ENCODE measurements at regions of chr1 and their contacts with region 1.

Region 1: GRCh38 chr1:107430540-107431228 is 289.8 kb downstream of the NTNG1 start:
- DNase-seq: peak; percentile 67
- ATAC-seq: peak; percentile 98
- H3K4me3 ChIP-seq: no peak overlapping the region; a peak in 1 of 6 replicates
- H3K27ac ChIP-seq: no peak overlapping the region
- H3K4me1 ChIP-seq: peaks cover 7% of the 10 kb centered on the region; the same call in 1 of the 2 replicates
- H3K27me3 ChIP-seq: no peaks in the 10 kb centered on the region
- CTCF ChIP-seq: peak; percentile 92
- EP300 ChIP-seq: no peak
- POLR2A ChIP-seq: no peak
- RAD21 ChIP-seq: peak; percentile 71

Region 2: GRCh38 chr1:107100331-107100984 is 330.2 kb before region 1 on chr1:
- CTCF ChIA-PET with region 1: no interaction called
- POLR2A ChIA-PET with region 1: no interaction called
- in situ Hi-C with region 1: no loop called
- intact Hi-C with region 1: no loop called
- DNase-seq: no peak
- ATAC-seq: no peak
- H3K4me3 ChIP-seq: no peak overlapping the region
- H3K27ac ChIP-seq: no peak overlapping the region
- H3K4me1 ChIP-seq: no peaks in the 10 kb centered on the region
- H3K27me3 ChIP-seq: no peaks in the 10 kb centered on the region
- CTCF ChIP-seq: no peak
- EP300 ChIP-seq: no peak
- POLR2A ChIP-seq: no peak
- RAD21 ChIP-seq: no peak

Region 3: DNA sequence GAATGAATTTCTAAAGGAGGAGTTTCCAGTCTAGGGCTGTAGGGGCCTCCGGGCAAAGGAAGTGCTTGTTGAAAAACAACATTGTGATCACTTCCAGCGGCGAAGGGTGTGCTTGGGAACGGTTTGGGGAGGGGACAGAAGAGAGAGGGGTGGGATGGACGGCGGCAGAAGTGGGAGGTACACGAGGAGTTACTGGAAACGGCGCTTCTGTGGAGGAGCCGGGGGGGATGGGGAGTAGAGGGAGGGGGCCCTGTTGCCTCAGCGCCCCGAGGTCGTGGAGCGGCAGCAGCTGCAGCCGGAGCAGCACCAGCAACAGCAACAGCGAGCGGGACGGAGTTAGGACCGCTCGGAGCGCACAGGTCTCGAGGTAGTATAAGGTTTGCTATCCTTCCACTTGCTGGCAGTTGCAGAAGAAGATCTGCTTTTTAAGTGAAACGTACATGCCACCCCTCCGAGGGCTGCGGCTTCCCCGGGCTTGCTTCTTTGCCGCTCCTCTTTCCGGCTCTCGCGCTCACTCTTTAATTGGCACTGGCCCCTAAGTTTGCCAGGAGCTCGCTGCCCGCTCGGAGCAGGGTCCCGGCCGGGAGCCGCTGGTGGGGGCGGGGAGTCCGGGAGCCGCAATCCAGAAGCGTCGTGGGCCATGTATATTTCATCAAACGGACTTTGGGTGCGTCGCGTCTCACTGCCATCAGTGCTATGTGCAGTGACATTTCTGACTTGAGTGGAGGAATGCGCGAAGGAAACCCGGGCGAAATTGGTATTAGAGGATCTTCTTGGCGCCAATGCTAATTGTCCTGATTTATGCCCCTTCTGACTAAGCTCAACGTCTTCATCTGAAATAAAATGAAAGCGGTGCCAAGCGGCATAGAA is 290.6 kb before region 1 on chr1:
- CTCF ChIA-PET with region 1: no interaction called
- POLR2A ChIA-PET with region 1: no interaction called
- in situ Hi-C with region 1: no loop called
- intact Hi-C with region 1: no loop called
- DNase-seq: no peak
- ATAC-seq: peak; percentile 82
- H3K4me3 ChIP-seq: no peak overlapping the region; a peak in 1 of 6 replicates
- H3K27ac ChIP-seq: no peak overlapping the region
- H3K4me1 ChIP-seq: 0 out of 2 replicates have a peak, but pooled peaks cover 5% of the 10 kb centered on the region
- H3K27me3 ChIP-seq: peaks cover 5 to 28% of the 10 kb centered on the region in 2 experiments; a peak in 4 of 5 replicates
- CTCF ChIP-seq: no peak
- EP300 ChIP-seq: no peak
- POLR2A ChIP-seq: no peak
- RAD21 ChIP-seq: no peak

Region 4: GRCh38 chr1:107277022-107277421 is 153.7 kb before region 1 on chr1:
- CTCF ChIA-PET with region 1: no interaction called
- POLR2A ChIA-PET with region 1: no interaction called
- in situ Hi-C with region 1: no loop called
- intact Hi-C with region 1: loop called (anchors 1 kb)
- DNase-seq: peak; percentile 46
- ATAC-seq: peak; percentile 83
- H3K4me3 ChIP-seq: no peak overlapping the region
- H3K27ac ChIP-seq: no peak overlapping the region
- H3K4me1 ChIP-seq: no peaks in the 10 kb centered on the region
- H3K27me3 ChIP-seq: no peaks in the 10 kb centered on the region
- CTCF ChIP-seq: peak; percentile 72
- EP300 ChIP-seq: no peak
- POLR2A ChIP-seq: no peak
- RAD21 ChIP-seq: peak; percentile 42; the same call in 1 of the 2 replicates

Region 5: DNA sequence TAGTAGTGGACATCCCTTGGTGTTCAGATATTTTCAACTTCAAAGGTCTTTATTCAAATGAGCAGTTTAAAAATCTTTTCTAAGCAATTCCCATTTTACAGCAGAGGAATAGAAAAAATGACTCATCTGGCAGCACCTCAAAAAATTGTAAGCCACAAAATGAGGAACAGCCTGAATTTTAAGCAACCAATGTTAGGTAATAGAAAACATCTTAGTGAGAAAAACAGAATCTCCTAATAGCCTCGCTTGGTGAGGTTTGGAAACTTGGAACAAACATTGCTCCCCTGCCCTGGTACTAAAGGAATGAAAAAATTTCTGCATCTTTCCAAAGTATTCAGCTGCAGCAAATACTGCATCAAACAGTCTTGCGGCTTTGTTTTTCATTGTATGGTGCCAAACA is 25.4 kb before region 1 on chr1:
- CTCF ChIA-PET with region 1: no interaction called
- POLR2A ChIA-PET with region 1: no interaction called
- in situ Hi-C with region 1: no loop called
- intact Hi-C with region 1: no loop called
- DNase-seq: no peak
- ATAC-seq: no peak
- H3K4me3 ChIP-seq: no peak overlapping the region
- H3K27ac ChIP-seq: no peak overlapping the region
- H3K4me1 ChIP-seq: no peaks in the 10 kb centered on the region
- H3K27me3 ChIP-seq: no peaks in the 10 kb centered on the region
- CTCF ChIP-seq: no peak
- EP300 ChIP-seq: no peak
- POLR2A ChIP-seq: no peak
- RAD21 ChIP-seq: no peak

Region 6: DNA sequence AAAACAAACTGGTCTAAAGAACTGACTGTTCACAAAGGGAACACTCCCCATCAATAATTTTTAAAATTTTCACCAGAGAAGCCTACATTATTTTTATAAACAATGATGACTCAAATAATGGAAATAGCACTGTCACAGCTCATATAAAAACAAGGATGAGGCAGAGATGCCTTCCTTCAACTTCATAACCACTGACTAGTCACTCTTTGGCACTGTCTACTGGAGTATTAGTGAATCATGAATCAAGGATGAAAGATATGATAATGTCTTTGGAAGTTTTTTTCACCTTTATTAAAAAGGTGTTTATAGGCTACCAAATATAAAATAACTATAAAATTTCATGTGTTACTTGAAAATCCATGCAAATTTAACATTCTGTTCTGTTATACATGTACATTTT is 217.4 kb after region 1 on chr1:
- CTCF ChIA-PET with region 1: no interaction called
- POLR2A ChIA-PET with region 1: no interaction called
- in situ Hi-C with region 1: no loop called
- intact Hi-C with region 1: no loop called
- DNase-seq: no peak
- ATAC-seq: no peak
- H3K4me3 ChIP-seq: no peak overlapping the region
- H3K27ac ChIP-seq: no peak overlapping the region
- H3K4me1 ChIP-seq: peaks cover 13% of the 10 kb centered on the region
- H3K27me3 ChIP-seq: no peaks in the 10 kb centered on the region
- CTCF ChIP-seq: no peak
- EP300 ChIP-seq: no peak
- POLR2A ChIP-seq: no peak
- RAD21 ChIP-seq: no peak

Region 7: GRCh38 chr1:107739646-107740045 is 309.0 kb after region 1 on chr1:
- CTCF ChIA-PET with region 1: no interaction called
- POLR2A ChIA-PET with region 1: no interaction called
- in situ Hi-C with region 1: loop called (anchors 5 kb)
- intact Hi-C with region 1: no loop called
- DNase-seq: no peak
- ATAC-seq: peak; percentile 50
- H3K4me3 ChIP-seq: no peak overlapping the region
- H3K27ac ChIP-seq: no peak overlapping the region
- H3K4me1 ChIP-seq: peaks cover 7% of the 10 kb centered on the region; the same call in 1 of the 2 replicates
- H3K27me3 ChIP-seq: no peaks in the 10 kb centered on the region
- CTCF ChIP-seq: no peak
- EP300 ChIP-seq: no peak
- POLR2A ChIP-seq: no peak
- RAD21 ChIP-seq: no peak